MCF 10A (cell line): ENCODE measurements at regions of chr16 and their contacts with region 1.

Region 1: DNA sequence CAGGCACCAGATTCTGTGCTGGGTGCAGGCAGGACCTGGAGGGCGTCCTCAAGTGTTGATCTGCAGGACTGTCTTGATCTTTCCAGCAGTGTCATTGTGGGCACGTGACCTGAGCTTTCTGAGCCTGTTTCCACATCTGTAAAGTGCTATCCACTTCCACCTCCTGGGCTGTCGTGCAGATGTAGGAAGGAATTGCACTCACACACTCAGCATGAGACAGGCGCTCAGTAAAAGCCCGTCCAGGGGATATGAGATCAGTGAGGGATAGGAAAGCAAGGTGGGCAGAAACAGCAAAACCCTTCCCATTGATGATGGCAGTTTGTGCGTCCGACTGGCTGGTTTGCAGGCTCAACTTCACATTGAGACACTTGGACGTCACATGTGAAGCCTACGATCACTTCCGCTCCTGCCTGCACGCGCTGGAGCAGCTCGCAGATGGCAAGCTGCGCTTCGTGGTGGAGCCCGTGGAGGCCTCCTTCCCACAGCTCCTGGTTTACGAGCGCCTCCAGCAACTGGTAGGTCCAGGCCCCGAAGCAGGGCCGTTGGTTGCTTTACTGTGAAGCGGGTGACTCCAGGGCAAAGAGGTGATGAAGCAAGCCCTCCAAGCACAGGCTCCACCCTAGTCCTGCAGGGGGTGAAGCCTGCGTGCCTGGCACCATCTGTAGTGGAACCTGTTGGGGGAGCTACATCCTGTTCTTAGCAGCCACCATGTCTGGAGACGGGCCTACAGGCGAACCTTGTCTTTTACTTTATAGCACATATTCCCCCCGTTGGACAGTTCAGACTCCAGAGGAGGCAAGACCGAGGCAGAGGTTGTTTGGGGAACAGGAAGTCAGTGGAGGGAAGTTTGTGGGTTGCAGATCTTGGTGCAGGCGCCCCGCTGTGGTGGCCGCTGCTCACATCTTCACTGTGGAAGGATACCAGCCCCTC is 23.0 kb downstream of the METTL22 start:
- DNase-seq: no peak
- H3K4me3 Mint-ChIP-seq: no peak overlapping the region
- H3K27ac Mint-ChIP-seq: no peak overlapping the region
- H3K4me1 Mint-ChIP-seq: no peaks in the 10 kb centered on the region
- H3K27me3 Mint-ChIP-seq: no peaks in the 10 kb centered on the region
- CTCF ChIP-seq: no peak

Region 2: DNA sequence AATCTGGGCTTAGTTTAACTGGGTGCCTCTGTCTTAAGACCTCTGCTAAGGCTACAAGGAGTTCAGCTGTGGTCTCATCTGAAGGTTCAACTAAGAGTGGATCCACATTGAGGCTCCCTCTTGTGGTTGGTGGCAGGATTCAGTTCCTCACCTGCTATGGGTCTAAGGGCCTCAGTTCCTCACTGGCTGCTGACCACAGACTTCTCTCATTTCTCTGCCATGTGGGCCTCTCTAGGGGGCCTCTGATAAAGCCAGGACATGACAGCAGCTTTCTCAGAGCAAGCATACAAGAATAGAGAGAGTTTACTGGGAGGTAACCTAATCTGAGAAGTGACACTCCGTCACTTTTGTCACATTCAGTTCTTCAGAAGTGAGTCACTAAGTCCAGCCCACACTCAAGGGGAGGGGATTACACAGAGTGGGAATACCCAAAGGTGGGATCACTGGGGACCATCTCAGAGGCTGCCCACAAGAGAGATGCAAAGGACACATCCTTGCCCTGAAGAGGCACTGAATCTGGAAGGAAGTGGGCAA is 10.8 kb after region 1 on chr16:
- CTCF ChIA-PET with region 1: interaction called, 14 read pairs
- POLR2A ChIA-PET with region 1: interaction called, 3 read pairs
- intact Hi-C with region 1: no loop called
- DNase-seq: peak; percentile 66
- H3K4me3 Mint-ChIP-seq: no peak overlapping the region
- H3K27ac Mint-ChIP-seq: no peak overlapping the region
- H3K4me1 Mint-ChIP-seq: no peaks in the 10 kb centered on the region
- H3K27me3 Mint-ChIP-seq: no peaks in the 10 kb centered on the region
- CTCF ChIP-seq: peak; percentile 36